ENCODE measurements at regions of chr9 and their contacts with region 1.

Region 1: DNA sequence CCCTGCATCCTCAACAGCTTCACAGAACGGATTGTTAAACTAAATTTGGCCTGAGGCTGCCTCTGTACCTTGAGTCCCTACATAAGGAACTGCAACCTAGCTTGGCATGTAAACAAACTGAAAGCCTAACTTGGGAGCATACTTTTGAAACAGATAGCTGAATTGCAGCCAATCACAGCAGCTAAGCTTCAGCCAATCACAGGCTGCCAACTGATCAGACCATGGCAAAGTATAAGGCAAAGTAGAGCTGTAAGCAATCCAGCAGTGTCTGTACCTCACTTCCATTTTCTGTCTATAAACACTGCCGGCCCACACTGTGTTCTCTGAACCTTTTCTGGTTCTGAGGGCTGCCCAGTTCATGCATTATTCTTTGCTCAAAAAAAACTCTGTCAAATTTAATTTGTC is 8.9 kb upstream of the ZNF483 start:
- DNase-seq: no peak
- H3K4me3 ChIP-seq: no peak overlapping the region
- CTCF ChIP-seq: no peak

Region 2: GRCh38 chr9:111412280-111412679 is 103.8 kb before region 1 on chr9:
- in situ Hi-C with region 1: no loop called
- DNase-seq: no peak
- H3K4me3 ChIP-seq: no peak overlapping the region
- CTCF ChIP-seq: no peak

Region 3: DNA sequence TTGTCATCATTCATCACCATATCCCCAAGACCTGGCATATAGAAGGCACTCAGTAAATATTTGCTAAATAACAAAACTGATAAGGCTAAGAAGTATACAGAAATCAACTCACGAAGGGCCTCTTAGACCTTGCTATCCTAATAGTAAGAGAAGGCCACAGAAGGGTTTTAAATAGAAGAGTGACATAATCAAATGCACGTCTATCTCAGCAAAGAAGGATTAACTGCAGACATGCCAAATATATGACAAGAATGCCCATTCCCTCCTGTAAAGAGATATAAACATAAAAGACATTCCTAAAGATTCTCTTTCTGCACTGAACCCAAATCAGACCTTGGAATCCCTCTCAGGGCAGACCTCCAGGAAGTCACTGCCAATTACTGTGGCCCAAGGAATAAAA is 65.9 kb before region 1 on chr9:
- in situ Hi-C with region 1: loop called (anchors 5 kb)
- DNase-seq: no peak
- H3K4me3 ChIP-seq: no peak overlapping the region
- CTCF ChIP-seq: no peak

Region 4: DNA sequence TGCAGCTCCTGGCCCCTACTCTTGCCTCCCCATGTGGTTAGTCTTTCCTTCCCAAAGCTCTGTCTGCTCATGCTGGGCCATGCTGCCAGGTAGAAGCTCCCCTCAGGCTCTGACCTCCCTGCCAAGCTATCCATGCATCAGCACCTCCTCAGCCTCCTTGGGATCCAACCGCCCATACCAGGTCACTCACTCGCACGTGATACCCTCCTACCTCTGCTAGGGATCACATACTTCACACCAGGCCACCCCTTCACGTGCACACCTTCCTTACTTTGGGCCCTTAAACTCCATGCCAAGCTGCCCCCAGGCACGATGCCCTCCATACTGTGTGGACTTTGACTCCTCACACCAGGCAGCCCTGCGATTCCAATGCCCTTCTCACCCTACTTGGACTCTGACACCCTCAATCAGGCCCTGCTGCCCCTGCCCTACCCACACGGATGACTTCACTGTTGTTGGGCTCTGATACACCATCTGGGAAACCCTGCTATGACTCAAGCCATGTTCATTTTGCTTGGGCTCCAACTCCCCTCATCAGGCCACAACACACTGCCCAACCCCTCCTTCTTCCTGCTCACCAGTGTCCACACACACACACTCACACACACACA is 43.0 kb after region 1 on chr9:
- in situ Hi-C with region 1: no loop called
- DNase-seq: no peak
- H3K4me3 ChIP-seq: no peak overlapping the region
- CTCF ChIP-seq: no peak

Region 5: GRCh38 chr9:111582888-111583287 is 66.8 kb after region 1 on chr9:
- in situ Hi-C with region 1: loop called (anchors 5 kb)
- DNase-seq: no peak
- H3K4me3 ChIP-seq: no peak overlapping the region
- CTCF ChIP-seq: no peak

Measured in astrocyte of the cerebellum (primary cell).